ENCODE measurements at regions of chr6 and their contacts with region 1.

Region 1: GRCh38 chr6:11434565-11435326 is 102.8 kb upstream of the TMEM170B start:
- DNase-seq: peak; percentile 100
- ATAC-seq: peak; percentile 95
- H3K4me3 ChIP-seq: peak overlapping the region in 1 of 3 experiments; percentile 16; a peak in 1 of 6 replicates
- H3K27ac ChIP-seq: peak overlapping the region; percentile 69
- H3K4me1 ChIP-seq: peaks cover 78% of the 10 kb centered on the region
- H3K27me3 ChIP-seq: no peaks in the 10 kb centered on the region
- CTCF ChIP-seq: peak; percentile 33; the same call in 1 of the 2 replicates
- EP300 ChIP-seq: peak; percentile 91 to 95
- POLR2A ChIP-seq: no peak
- RAD21 ChIP-seq: no peak

Region 2: GRCh38 chr6:11218538-11219399 is 216.0 kb before region 1 on chr6:
- CTCF ChIA-PET with region 1: no interaction called
- POLR2A ChIA-PET with region 1: no interaction called
- in situ Hi-C with region 1: no loop called
- intact Hi-C with region 1: loop called (anchors 5 kb)
- DNase-seq: peak; percentile 99
- ATAC-seq: peak; percentile 91
- H3K4me3 ChIP-seq: peak overlapping the region; percentile 13 to 54 (median 21)
- H3K27ac ChIP-seq: peak overlapping the region; percentile 85
- H3K4me1 ChIP-seq: peaks cover 100% of the 10 kb centered on the region
- H3K27me3 ChIP-seq: no peaks in the 10 kb centered on the region
- CTCF ChIP-seq: peak; percentile 46
- EP300 ChIP-seq: peak; percentile 86 to 89; a peak in 3 of 4 replicates
- POLR2A ChIP-seq: peak in 1 of 2 experiments; percentile 77; a peak in 3 of 4 replicates
- RAD21 ChIP-seq: peak; percentile 76

Region 3: DNA sequence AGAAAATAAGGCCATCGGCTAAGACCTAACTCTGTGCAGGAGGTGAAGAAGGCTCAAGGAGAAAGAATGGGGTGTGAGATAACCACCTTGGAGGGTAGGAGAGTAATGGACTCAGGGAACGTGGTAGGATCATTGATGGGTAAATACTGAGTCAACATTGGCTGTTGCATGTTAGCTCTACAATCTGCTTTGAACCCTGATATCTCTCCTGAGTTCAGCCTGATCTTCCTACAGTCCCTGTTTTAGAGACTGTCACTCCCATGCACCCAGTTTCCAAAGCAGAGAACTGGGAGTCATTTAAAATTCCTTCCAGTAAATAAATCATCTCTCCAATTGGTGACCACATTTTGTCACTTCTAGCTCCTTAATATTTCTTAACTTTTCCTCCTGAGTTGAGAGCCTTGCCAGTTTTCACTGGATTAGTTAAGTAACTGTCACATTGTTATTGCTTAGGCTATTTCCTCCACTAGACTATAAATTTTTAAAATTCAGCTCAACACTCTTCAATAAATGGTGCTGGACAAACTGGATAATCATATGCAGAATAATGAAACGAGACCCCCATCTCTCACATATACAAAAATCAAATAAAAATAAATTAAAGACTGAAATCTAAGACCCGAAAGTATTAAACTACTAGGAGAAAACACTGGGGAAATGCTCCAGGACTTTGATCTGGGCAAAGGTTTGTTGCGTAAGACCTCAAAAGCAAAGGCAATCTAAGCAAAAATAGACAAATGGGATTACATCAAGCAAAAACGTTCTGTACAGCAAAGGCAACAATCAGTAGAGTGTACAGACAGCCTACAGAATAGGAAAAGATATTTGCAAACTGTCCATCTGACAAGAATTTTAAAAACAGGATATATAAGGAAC is 36.1 kb before region 1 on chr6:
- CTCF ChIA-PET with region 1: no interaction called
- POLR2A ChIA-PET with region 1: no interaction called
- in situ Hi-C with region 1: no loop called
- intact Hi-C with region 1: loop called (anchors 2 kb)
- DNase-seq: peak; percentile 97
- ATAC-seq: peak; percentile 88
- H3K4me3 ChIP-seq: peak overlapping the region in 1 of 3 experiments; percentile 19; a peak in 1 of 6 replicates
- H3K27ac ChIP-seq: peak overlapping the region; percentile 95
- H3K4me1 ChIP-seq: peaks cover 73% of the 10 kb centered on the region
- H3K27me3 ChIP-seq: no peaks in the 10 kb centered on the region
- CTCF ChIP-seq: no peak
- EP300 ChIP-seq: peak; percentile 76 to 98
- POLR2A ChIP-seq: peak; percentile 41 to 45; a peak in 2 of 4 replicates
- RAD21 ChIP-seq: no peak

Region 4: GRCh38 chr6:11448038-11448437 is 13.3 kb after region 1 on chr6:
- CTCF ChIA-PET with region 1: no interaction called
- POLR2A ChIA-PET with region 1: no interaction called
- in situ Hi-C with region 1: no loop called
- intact Hi-C with region 1: no loop called
- DNase-seq: no peak
- ATAC-seq: no peak
- H3K4me3 ChIP-seq: no peak overlapping the region
- H3K27ac ChIP-seq: no peak overlapping the region
- H3K4me1 ChIP-seq: peaks cover 26% of the 10 kb centered on the region
- H3K27me3 ChIP-seq: no peaks in the 10 kb centered on the region
- CTCF ChIP-seq: no peak
- EP300 ChIP-seq: no peak
- POLR2A ChIP-seq: no peak
- RAD21 ChIP-seq: no peak